ENCODE measurements at regions of chr13 and their contacts with region 1.

Region 1: DNA sequence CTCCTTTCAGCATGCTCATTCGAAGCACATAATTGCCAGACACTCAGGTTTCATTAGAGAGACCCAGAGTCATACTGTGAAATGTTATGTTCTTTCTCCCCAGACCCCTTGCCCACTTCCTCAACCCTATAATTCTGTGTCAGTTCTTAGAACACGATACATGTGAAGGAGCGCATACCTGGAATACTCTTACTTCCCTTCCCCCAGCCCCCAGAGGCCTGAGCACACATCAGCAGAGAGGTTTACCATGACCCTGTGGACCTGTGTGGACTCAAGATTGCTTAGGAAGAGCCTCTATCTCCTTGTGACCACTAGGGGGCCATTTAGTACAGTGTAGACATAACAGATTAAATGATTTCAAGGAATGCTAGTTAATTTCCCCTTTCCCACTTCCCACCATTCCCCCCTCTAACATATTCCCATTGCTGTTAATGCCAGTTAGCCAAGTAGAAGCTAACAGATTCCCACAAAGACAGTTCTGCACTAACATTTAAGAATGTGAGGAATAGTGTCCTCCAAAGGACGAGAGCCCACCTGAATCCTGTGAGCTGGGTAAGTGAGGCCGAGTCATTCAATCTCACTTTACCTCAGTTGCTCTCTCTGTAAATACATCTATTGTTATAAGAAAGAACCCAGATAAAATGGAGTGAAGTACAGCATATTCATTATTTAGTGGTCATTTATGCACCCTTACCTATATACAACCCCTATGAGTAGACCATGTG is 154.2 kb upstream of the MAB21L1 start:
- DNase-seq: no peak
- ATAC-seq: peak; percentile 57 to 78 (median 64)
- H3K4me3 ChIP-seq: no peak overlapping the region
- H3K27ac ChIP-seq: no peak overlapping the region
- H3K4me1 ChIP-seq: no peaks in the 10 kb centered on the region
- H3K27me3 ChIP-seq: no peaks in the 10 kb centered on the region
- CTCF ChIP-seq: peak; percentile 56

Region 2: DNA sequence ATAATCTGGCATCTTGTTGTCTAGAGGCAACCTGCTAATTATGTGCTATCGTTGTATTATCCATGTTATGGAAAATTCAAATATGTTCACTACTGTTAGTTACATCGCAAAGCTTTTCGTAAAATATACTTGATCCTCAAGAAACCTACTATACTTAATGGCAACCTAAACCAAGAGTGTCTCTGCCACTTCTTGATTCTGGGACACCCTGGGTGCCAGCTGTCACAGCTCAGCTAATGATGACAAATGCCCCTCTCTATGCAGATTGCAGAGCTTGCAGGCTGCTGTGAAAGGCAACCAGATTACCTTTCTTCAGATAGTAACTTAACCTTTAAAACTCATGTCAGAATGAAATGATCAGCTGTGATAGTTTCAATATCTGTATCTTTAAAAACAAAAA is 145.3 kb before region 1 on chr13:
- intact Hi-C with region 1: no loop called
- DNase-seq: no peak
- ATAC-seq: peak in 2 of 4 donors; percentile 40 to 55
- H3K4me3 ChIP-seq: no peak overlapping the region
- H3K27ac ChIP-seq: no peak overlapping the region
- H3K4me1 ChIP-seq: no peaks in the 10 kb centered on the region
- H3K27me3 ChIP-seq: no peaks in the 10 kb centered on the region
- CTCF ChIP-seq: no peak

Region 3: DNA sequence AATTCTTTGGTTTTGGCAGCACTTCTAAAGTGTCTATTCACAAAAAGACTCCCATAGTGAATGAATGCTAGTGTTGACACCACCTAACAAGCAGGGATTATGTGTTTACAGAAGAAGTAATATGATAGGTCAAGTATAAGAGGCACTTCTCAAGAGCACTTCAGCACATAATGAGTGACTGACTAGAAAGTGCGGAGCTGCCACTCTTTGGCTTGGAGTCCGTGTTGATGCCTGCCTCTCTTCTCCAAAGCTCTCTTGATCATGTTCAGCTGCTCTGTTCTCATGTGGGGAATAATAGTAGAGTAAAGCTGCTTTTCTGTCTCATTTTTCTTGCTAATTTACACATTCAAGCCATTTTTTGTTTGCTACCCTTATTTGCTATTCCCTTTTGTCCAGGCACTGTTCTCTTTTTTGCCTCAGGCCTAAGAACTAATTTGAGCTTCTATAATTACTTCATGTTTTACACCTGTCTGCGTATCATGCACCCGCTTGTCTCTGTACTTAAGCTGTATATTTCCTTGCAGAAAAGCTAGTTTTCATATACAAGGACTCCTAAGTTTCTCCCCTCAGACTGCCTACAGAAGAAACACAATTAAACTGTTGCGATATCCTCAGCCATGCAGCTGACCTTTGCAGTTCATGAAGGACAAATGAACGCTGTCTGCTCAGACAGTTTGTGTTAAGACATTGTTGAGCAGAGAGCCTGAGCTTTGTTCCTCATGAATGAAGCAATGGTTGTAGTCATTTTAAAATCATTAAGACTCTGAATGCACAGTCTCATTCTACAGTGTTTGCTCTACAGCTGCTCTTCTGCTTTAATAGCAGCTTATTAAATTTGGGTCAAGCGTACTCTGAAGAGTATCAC is 131.3 kb before region 1 on chr13:
- intact Hi-C with region 1: no loop called
- DNase-seq: no peak
- ATAC-seq: peak in 1 of 4 donors; percentile 67
- H3K4me3 ChIP-seq: no peak overlapping the region
- H3K27ac ChIP-seq: no peak overlapping the region
- H3K4me1 ChIP-seq: no peaks in the 10 kb centered on the region
- H3K27me3 ChIP-seq: no peaks in the 10 kb centered on the region
- CTCF ChIP-seq: no peak

Region 4: DNA sequence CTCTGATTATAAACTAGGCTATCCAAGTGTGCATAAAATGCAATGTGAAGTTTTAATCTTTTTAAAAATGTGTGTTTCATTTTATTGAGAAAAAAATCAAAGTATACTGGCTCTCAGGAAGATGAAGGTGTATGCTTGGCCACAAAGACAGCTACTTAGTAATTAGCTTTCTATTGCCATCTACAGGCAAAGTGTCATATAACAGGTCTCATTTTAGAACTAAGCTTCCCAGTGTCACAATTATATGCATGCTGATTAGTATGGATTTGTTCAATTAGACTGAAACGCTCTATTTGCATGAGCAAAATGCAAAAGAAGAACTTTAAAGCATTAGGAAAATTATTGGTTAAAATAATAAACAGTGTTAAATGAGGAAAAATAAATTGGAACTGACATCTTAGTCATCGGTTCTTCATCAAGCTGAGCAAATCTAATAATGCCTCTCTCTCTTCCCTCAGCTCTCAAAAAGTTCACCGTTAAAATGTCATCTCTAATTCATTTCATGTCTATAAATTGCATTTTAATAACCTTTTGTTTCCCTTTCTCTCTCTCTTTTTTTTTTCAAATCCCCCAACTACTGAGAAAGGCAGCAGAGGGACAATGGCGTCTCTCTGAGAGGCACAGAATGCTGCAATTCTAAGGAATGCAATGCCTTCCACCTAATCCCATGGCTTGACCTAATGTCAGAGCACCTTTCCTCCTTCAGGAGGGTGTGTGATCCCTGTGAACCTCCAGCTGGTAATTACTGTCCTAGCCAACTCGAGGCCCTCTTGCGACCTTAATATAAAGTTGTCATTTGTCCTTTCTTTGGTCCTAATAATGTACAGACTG is 158.8 kb after region 1 on chr13:
- intact Hi-C with region 1: loop called in 1 of 2 experiments (anchors 10 kb)
- DNase-seq: no peak
- ATAC-seq: peak in 2 of 4 donors; percentile 36 to 72
- H3K4me3 ChIP-seq: no peak overlapping the region
- H3K27ac ChIP-seq: no peak overlapping the region
- H3K4me1 ChIP-seq: no peaks in the 10 kb centered on the region
- H3K27me3 ChIP-seq: peaks cover 0 to 3% (median 0%) of the 10 kb centered on the region in 3 donors
- CTCF ChIP-seq: peak; percentile 67

Region 5: GRCh38 chr13:36297366-36298338 is 666.9 kb after region 1 on chr13 and contains the start of gene CCDC169:
- intact Hi-C with region 1: no loop called
- DNase-seq: peak; percentile 66 to 80
- ATAC-seq: peak; percentile 77 to 92 (median 90)
- H3K4me3 ChIP-seq: peak within 1 kb of the TSS; percentile 79
- H3K27ac ChIP-seq: no peak within 1 kb of the TSS
- H3K4me1 ChIP-seq: peaks cover 4% of the 10 kb centered on the region
- H3K27me3 ChIP-seq: no peaks in the 10 kb centered on the region
- CTCF ChIP-seq: no peak
- total RNA-seq, gene CCDC169: 0.48 to 3.5 (median 1.4) TPM

Measured in psoas muscle (tissue), 8 donors.